Calu3 (cell line): ENCODE measurements at regions of chr15 and their contacts with region 1.

Region 1: GRCh38 chr15:41116116-41116871 is at the start of gene INO80:
- DNase-seq: peak; percentile 91
- H3K4me3 Mint-ChIP-seq: peak within 1 kb of the TSS; percentile 91
- H3K27ac Mint-ChIP-seq: peak within 1 kb of the TSS; percentile 99
- H3K4me1 Mint-ChIP-seq: no peaks in the 10 kb centered on the region
- H3K27me3 Mint-ChIP-seq: no peaks in the 10 kb centered on the region
- CTCF ChIP-seq: no peak
- total RNA-seq, gene INO80: 15.3 and 16.9 TPM in 2 replicates

Region 2: GRCh38 chr15:40594429-40594836 is 521.9 kb before region 1 on chr15:
- CTCF ChIA-PET with region 1: interaction called, 11 read pairs
- intact Hi-C with region 1: no loop called
- DNase-seq: peak; percentile 48
- H3K4me3 Mint-ChIP-seq: peak overlapping the region; percentile 97
- H3K27ac Mint-ChIP-seq: peak overlapping the region; percentile 99
- H3K4me1 Mint-ChIP-seq: peaks cover 17% of the 10 kb centered on the region
- H3K27me3 Mint-ChIP-seq: no peaks in the 10 kb centered on the region
- CTCF ChIP-seq: no peak

Region 3: DNA sequence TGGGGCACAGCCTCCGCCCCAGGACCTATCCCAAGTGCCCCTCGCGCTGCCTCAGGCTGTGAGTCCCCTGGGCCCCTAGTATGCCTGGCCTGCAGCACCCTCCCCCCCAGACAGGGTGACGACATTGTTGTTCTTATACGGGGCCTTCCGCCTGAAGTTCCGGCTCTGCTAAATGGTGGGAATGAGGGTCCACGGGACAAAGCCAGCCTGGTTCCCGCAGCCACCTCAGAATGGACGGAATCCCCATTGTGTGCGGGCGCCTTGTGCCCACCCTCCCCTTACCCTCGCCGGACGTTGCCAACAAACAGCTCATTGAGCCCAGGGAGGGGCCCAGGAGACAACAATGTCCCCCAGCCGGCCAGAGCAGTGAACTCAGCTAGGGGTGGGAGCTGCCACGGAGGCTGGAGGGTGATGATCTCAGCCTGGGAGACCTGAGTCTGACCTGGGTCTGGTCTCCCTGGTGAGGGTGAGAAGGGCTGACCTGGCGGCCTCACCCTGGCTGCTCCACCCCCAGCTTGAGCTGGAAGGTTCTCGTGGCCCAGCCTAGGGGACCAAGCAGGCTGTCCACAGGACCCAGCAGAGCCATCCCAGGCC is 197.4 kb before region 1 on chr15:
- CTCF ChIA-PET with region 1: no interaction called
- intact Hi-C with region 1: no loop called
- DNase-seq: no peak
- H3K4me3 Mint-ChIP-seq: no peak overlapping the region
- H3K27ac Mint-ChIP-seq: no peak overlapping the region
- H3K4me1 Mint-ChIP-seq: no peaks in the 10 kb centered on the region
- H3K27me3 Mint-ChIP-seq: peaks cover 1% of the 10 kb centered on the region
- CTCF ChIP-seq: no peak

Region 4: DNA sequence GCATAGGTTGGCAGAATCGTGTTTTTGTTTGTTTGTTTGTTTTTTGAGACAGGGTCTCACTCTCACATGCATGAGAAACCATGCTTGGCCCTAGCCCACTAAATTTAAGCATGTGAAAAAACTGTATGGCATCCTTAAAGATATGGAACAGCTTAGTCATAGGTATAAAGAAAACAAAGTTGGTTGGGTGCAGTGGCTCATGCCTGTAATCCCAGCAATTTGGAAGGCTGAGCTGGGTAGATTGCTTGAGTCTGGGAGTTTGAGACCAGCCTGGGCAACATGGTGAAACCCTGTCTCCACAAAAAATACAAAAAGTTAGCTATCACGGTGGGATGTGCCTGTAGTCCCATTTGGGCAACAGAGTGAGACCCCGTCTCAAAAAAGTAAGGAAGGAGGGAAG is 89.0 kb after region 1 on chr15:
- CTCF ChIA-PET with region 1: no interaction called
- intact Hi-C with region 1: no loop called
- DNase-seq: no peak
- H3K4me3 Mint-ChIP-seq: no peak overlapping the region
- H3K27ac Mint-ChIP-seq: no peak overlapping the region
- H3K4me1 Mint-ChIP-seq: no peaks in the 10 kb centered on the region
- H3K27me3 Mint-ChIP-seq: no peaks in the 10 kb centered on the region
- CTCF ChIP-seq: no peak